Stomach (tissue), 19 donors: ENCODE measurements at regions of chr4 and their contacts with region 1.

Region 1: DNA sequence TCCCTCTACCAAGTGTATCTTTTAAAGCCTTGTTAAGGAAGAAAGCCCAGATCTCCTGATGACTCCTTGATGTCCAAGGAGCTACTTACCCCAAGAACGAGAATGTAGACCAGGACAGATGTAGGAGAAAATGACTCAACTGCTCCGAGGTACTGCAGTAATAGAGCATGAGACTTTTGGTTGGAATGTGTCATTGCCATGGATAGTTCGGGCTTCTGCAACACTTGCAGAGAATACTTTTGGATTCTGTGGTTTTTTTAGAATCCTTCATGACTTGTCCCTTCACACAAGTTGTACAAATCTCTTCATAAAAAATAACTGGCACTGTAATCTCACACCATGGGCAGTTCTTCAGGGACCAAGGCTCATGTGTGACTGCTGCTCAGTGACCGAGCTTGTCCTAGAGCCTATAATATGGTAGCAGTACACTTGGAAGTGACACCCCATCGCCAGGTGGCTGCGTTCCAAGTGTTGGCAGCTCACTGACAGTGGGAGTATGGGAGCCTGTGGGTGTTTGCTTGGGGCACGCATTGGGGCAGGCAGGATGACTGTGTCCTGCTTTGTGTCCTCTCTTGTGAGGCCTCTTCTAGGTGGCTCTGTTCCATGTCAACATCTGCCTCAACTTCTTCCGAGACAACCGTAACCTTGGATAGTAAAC is 87.9 kb upstream of the WDR1 start:
- DNase-seq: no peak
- H3K4me3 ChIP-seq: no peak overlapping the region
- H3K27ac ChIP-seq: no peak overlapping the region
- H3K4me1 ChIP-seq: no peaks in the 10 kb centered on the region
- H3K27me3 ChIP-seq: no peaks in the 10 kb centered on the region
- CTCF ChIP-seq: no peak
- EP300 ChIP-seq: no peak
- POLR2A ChIP-seq: no peak

Region 2: DNA sequence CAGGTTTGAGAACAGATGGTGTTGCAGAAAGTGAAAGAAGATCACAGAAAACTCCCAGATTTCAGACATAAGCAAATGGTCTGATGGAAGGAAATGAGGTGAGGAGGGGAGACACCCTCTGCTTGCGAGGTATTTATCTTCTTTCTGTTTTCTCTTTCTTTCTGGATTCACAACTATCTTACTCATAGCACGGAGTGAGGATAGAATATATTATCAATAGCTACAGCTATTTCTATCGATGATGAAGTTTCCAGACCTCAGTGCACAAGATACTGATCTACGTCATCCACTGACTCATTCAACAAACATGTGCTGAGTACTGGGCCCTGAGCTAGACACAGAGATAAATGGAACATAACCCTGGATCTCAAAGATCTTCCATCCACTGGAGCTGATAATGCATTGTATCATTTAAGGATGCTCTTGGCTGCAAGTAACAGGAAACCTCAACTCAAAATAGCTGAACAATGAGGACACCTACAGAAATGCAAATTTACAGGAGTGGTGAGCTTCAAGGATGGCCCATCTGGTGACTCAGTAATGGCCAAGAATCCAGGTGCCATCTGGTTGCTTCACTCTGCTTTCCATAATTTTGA is 204.5 kb before region 1 on chr4:
- intact Hi-C with region 1: no loop called
- DNase-seq: no peak
- H3K4me3 ChIP-seq: no peak overlapping the region
- H3K27ac ChIP-seq: no peak overlapping the region
- H3K4me1 ChIP-seq: peaks cover 0 to 21% (median 10%) of the 10 kb centered on the region in 4 donors
- H3K27me3 ChIP-seq: no peaks in the 10 kb centered on the region
- CTCF ChIP-seq: no peak
- EP300 ChIP-seq: no peak
- POLR2A ChIP-seq: no peak

Region 3: GRCh38 chr4:10074767-10075105 is 129.8 kb before region 1 on chr4:
- intact Hi-C with region 1: no loop called
- DNase-seq: peak; percentile 2 to 19
- H3K4me3 ChIP-seq: no peak overlapping the region
- H3K27ac ChIP-seq: no peak overlapping the region
- H3K4me1 ChIP-seq: peaks cover 13 to 23% (median 16%) of the 10 kb centered on the region in 4 donors
- H3K27me3 ChIP-seq: no peaks in the 10 kb centered on the region
- CTCF ChIP-seq: no peak
- EP300 ChIP-seq: no peak
- POLR2A ChIP-seq: no peak

Region 4: DNA sequence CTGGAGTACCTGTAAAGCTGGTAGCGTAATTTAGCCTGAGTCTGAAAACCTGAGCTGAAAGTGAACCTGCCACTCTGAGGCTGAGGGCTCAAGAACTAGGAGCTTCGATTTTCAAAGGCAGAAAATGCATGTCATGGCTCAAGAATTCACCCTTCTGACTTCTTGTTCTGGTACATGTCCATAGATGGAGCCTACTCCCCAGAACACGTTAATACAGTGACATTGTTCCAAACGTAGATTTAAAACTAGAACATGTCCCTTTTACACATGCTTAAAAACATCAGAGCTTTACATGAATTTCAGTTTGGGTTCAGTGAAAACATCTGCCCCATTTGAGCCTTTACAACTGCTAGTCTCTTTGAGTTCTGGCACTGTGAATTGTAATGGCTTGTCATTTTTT is 27.6 kb after region 1 on chr4:
- intact Hi-C with region 1: loop called (anchors 2 kb)
- DNase-seq: peak in 1 of 2 donors; percentile 15
- H3K4me3 ChIP-seq: no peak overlapping the region
- H3K27ac ChIP-seq: peak overlapping the region in 2 of 5 donors; percentile 48 to 80
- H3K4me1 ChIP-seq: peaks cover 0 to 13% (median 2%) of the 10 kb centered on the region in 4 donors
- H3K27me3 ChIP-seq: no peaks in the 10 kb centered on the region
- CTCF ChIP-seq: no peak
- EP300 ChIP-seq: no peak
- POLR2A ChIP-seq: no peak

Region 5: DNA sequence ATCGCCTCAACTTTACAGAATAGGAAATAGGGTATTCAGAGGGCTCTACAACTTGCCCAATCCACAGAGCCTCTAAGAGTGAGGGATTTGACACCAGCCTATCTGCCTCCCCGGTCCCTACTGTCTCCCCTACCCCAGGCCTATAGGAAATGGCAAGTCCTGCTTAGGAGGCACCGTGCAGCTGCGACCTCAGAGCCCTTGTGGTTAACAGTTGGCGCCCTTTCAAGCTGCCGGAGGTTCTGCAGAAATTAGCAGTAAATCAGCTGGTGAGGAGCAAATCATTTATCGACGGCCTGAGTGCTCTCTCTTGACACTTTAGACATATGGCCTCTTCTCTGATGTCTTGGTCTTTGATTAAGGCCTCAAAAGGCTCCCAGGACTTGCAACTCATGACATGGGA is 383.2 kb after region 1 on chr4:
- intact Hi-C with region 1: no loop called
- DNase-seq: no peak
- H3K4me3 ChIP-seq: no peak overlapping the region
- H3K27ac ChIP-seq: no peak overlapping the region
- H3K4me1 ChIP-seq: peaks cover 0 to 13% (median 7%) of the 10 kb centered on the region in 4 donors
- H3K27me3 ChIP-seq: no peaks in the 10 kb centered on the region
- CTCF ChIP-seq: no peak
- EP300 ChIP-seq: no peak
- POLR2A ChIP-seq: no peak